Dorsolateral prefrontal cortex (tissue), 120 donors: ENCODE measurements at regions of chr22 and their contacts with region 1.

Region 1: GRCh38 chr22:35539910-35540594 is 579 bp upstream of the RASD2 start:
- DNase-seq: peak in 7 of 10 donors; percentile 45 to 83 (median 59)
- H3K4me3 ChIP-seq: peak overlapping the region; percentile 48 to 84 (median 66)
- H3K27ac ChIP-seq: peak overlapping the region in 47 of 59 donors; percentile 13 to 83 (median 66)
- H3K27me3 ChIP-seq: no peaks in the 10 kb centered on the region
- CTCF ChIP-seq: no peak

Region 2: DNA sequence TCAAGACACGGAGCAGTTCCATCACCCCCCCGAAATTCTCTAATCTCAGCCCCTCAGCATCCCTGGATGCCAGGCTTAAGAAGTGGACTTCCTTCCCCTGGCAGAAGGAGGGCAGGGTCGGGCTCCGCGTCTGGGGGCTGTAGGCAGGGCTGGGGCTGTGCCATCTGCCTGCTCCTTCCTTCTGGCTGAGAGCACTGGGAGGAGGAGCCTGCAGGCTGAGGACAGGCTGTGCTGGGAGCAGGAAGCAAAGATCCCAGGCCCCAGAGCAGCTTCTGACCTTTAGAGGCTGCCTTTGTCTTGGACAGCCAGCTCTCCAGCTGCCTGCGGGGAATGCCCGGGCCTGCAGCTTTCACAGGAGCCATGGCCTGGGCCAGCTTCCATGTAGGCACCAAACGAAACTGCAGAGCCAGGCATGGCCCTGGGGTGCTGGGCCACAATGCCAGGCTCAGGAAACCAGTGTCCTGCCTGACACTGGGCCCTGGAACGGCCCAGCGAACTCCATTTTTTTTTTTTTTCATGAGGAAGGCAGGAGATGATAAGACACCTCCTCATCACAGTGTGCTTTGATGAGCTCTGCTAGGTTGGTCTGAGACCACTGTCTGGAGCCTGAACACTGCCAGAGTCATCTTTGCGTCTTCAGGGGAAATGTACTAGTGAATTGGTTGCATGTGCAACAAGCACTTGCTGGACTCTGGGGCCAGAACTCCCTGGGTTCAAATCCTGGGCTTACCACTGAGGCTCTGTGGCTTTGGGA is 72.2 kb before region 1 on chr22:
- intact Hi-C with region 1: loop called in 1 of 2 experiments (anchors 5 kb)
- DNase-seq: peak; percentile 61 to 88 (median 80)
- H3K4me3 ChIP-seq: peak overlapping the region in 6 of 59 donors; percentile 0 to 30 (median 2)
- H3K27ac ChIP-seq: peak overlapping the region; percentile 51 to 97 (median 90)
- H3K27me3 ChIP-seq: no peaks in the 10 kb centered on the region
- CTCF ChIP-seq: peak in 7 of 56 donors; percentile 11 to 28 (median 19)

Region 3: GRCh38 chr22:35660291-35661127 is 120.5 kb after region 1 on chr22:
- intact Hi-C with region 1: no loop called
- DNase-seq: no peak
- H3K4me3 ChIP-seq: no peak overlapping the region
- H3K27ac ChIP-seq: no peak overlapping the region
- H3K27me3 ChIP-seq: no peaks in the 10 kb centered on the region
- CTCF ChIP-seq: no peak